ENCODE measurements at regions of chr3 and their contacts with region 1.

Region 1: DNA sequence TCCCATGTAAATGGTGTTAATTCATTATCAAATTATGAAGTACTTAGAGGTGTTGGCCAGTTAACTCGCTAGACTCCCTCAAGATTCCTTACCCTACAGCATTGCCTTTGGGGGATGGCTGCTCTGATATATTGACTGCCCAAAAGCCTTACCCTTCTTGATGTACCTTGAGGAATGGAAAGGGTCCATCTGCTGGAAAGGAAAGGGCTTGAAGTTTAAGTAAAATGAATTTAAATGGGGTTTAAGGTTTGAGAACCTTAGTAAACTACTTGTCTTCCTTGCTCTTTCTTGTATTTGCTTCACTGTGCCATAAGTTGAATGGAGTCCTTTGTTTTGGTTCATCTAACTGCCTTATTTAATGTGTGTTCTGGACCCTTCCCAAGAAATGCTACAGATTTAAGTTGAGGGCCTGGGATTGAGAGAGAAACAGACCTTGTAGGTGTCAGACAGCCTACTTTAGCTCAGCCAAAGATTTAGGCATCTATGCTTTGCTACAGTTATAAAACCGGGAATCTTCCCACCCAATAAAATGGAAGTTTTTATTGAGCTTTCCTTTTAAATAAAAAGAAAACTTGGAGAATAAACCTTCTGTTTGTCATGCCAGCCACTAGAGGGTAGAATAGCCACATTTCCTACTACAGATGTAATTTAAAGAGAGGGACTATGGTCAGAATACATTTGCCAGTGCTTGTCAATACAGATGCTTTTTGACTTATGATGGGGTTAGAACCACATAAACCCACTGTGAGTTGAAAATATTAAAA is 25.3 kb downstream of the CMSS1 start:
- DNase-seq: no peak

Region 2: GRCh38 chr3:98726084-98726483 is 1116.9 kb before region 1 on chr3:
- intact Hi-C with region 1: no loop called
- DNase-seq: no peak

Region 3: GRCh38 chr3:99199021-99199420 is 644.0 kb before region 1 on chr3:
- intact Hi-C with region 1: no loop called
- DNase-seq: no peak

Region 4: DNA sequence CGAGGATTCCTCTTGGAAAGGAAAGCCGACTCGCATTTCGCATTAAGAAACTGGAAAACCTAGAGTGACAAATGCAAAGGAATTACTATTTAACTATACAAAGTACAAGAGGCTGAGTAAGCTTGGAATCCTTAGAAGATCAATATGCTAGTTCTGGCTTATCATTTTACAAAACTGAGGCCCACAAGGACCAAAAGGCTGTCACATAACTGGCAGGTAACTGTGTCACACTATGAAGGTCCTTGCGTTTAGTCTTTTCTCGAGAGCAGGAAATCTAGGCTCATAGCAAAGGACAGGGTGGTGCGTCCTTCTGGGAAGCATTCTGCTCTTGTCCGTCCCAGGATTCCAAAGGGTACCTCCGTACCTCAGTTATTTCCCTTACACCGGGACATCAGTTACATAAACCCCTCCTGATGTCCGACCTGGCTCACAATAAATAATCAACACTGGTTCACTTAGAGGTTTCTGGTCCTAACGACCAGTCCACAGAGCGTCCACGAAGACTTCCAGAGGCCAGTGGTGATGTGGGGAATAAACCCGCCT is 1842.9 kb after region 1 on chr3:
- intact Hi-C with region 1: loop called in 1 of 2 experiments (anchors 10 kb)
- DNase-seq: no peak

Measured in posterior vena cava (tissue), 2 donors.